ENCODE measurements at regions of chrX and their contacts with region 1.

Region 1: GRCh38 chrX:137969191-137969590 is 403.3 kb downstream of the ZIC3 start:
- DNase-seq: no peak
- ATAC-seq: no peak
- H3K4me3 ChIP-seq: no peak overlapping the region
- H3K27ac ChIP-seq: no peak overlapping the region
- H3K4me1 ChIP-seq: no peaks in the 10 kb centered on the region
- H3K27me3 ChIP-seq: no peaks in the 10 kb centered on the region

Region 2: GRCh38 chrX:137823257-137823656 is 145.9 kb before region 1 on chrX:
- intact Hi-C with region 1: no loop called
- DNase-seq: no peak
- ATAC-seq: no peak
- H3K4me3 ChIP-seq: no peak overlapping the region
- H3K27ac ChIP-seq: no peak overlapping the region
- H3K4me1 ChIP-seq: no peaks in the 10 kb centered on the region
- H3K27me3 ChIP-seq: no peaks in the 10 kb centered on the region

Region 3: DNA sequence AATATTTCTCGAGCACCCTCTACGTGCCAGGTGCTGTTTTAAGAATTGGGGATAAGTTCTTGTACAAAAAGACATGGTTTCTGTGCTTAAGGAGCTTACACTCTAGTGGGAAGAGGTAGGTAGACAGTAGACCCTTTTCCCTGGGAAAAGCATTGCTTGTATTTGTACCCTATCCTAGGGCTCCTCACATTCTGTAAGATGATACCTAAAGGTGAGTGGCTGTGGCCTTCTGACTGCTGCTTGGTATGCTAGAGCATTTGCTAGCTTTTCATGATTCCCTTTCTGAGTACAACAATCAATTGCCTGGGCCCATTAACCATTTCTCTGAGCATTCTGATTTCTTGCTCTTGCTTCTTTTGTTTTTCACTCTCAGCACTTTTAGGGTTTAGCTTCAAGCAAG is 116.7 kb before region 1 on chrX:
- intact Hi-C with region 1: no loop called
- DNase-seq: no peak
- ATAC-seq: no peak
- H3K4me3 ChIP-seq: no peak overlapping the region
- H3K27ac ChIP-seq: no peak overlapping the region
- H3K4me1 ChIP-seq: no peaks in the 10 kb centered on the region
- H3K27me3 ChIP-seq: no peaks in the 10 kb centered on the region

Region 4: GRCh38 chrX:137896123-137896522 is 73.1 kb before region 1 on chrX:
- intact Hi-C with region 1: loop called in 1 of 2 experiments (anchors 5 kb)
- DNase-seq: no peak
- ATAC-seq: no peak
- H3K4me3 ChIP-seq: no peak overlapping the region
- H3K27ac ChIP-seq: no peak overlapping the region
- H3K4me1 ChIP-seq: no peaks in the 10 kb centered on the region
- H3K27me3 ChIP-seq: no peaks in the 10 kb centered on the region

Region 5: GRCh38 chrX:138411048-138411447 is 441.9 kb after region 1 on chrX:
- intact Hi-C with region 1: no loop called
- DNase-seq: no peak
- ATAC-seq: no peak
- H3K4me3 ChIP-seq: no peak overlapping the region
- H3K27ac ChIP-seq: no peak overlapping the region
- H3K4me1 ChIP-seq: no peaks in the 10 kb centered on the region
- H3K27me3 ChIP-seq: no peaks in the 10 kb centered on the region

Measured in aorta (tissue), 5 donors.